MCF 10A (cell line): ENCODE measurements at regions of chr3 and their contacts with region 1.

Region 1: DNA sequence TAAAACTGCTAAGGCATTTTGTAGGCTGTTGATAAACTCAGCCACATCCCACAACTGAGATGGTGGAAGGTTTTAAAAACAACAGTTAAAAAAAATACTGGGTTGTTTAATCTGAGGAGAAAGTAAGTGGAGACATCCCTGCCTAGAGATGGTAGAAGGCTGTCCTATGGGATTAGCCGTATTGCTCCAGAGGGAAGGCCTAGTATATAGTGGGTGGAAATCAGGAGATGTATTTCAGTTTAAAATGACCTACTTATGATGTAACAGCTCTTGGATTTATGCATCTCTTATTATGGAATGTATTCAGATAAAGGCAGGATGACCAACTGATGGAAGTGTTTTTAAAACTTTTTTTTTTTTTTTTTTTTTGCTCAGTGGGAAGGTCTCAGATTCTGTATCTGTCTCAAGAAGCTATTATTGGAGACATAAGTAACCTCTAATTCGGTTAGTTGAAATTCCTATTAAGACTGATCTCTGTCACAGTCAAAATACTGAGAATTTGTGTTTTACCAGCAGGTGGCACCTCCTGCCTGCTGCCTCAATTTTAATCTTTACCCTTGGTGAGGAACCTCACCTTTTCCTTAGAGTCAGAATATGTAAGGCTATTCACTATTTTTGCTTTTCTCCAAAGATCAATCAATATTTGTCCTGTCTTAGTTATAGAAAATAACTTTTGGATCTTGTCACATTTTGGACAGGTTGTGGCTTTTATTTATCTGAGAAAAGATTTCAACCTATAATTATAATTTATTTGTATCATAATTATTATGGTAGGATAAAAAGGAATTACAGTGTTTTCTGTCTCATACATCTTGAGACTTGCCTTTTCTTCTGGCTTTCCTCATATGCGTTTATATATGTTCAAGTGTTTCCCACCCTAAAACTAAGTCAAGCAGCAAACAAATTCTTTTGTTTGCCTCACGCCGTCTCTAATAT is 63.0 kb downstream of the VPS8 start:
- DNase-seq: peak; percentile 35
- H3K4me3 Mint-ChIP-seq: no peak overlapping the region
- H3K27ac Mint-ChIP-seq: no peak overlapping the region
- H3K4me1 Mint-ChIP-seq: no peaks in the 10 kb centered on the region
- H3K27me3 Mint-ChIP-seq: no peaks in the 10 kb centered on the region
- CTCF ChIP-seq: peak; percentile 71

Region 2: DNA sequence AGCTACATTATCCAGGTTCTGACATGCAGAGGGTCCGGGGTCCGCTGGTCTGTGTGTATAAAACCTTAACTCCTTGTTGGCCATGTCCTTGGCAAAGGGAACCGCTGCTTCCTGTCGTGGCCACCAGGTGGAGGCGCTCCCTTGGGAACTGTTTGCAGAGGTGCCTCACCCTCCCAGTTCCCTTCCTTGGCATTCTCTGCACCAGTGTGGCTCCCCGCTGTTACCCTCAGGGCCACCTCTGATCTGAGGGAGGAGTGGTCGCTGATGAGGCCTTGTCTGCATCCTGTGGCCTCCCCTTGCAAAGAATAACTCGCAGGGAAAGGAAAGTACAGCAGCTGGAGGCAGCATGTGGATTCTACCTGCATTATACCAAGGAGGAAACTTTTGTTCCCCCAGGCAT is 405.6 kb before region 1 on chr3:
- CTCF ChIA-PET with region 1: no interaction called
- POLR2A ChIA-PET with region 1: no interaction called
- intact Hi-C with region 1: no loop called
- DNase-seq: peak; percentile 68
- H3K4me3 Mint-ChIP-seq: no peak overlapping the region
- H3K27ac Mint-ChIP-seq: no peak overlapping the region
- H3K4me1 Mint-ChIP-seq: no peaks in the 10 kb centered on the region
- H3K27me3 Mint-ChIP-seq: peaks cover 44% of the 10 kb centered on the region
- CTCF ChIP-seq: peak; percentile 78

Region 3: GRCh38 chr3:184561061-184561912 is 313.7 kb before region 1 on chr3 and contains the start of gene EPHB3:
- CTCF ChIA-PET with region 1: no interaction called
- POLR2A ChIA-PET with region 1: no interaction called
- intact Hi-C with region 1: no loop called
- DNase-seq: peak; percentile 99
- H3K4me3 Mint-ChIP-seq: peak within 1 kb of the TSS; percentile 83
- H3K27ac Mint-ChIP-seq: no peak within 1 kb of the TSS
- H3K4me1 Mint-ChIP-seq: peaks cover 38% of the 10 kb centered on the region
- H3K27me3 Mint-ChIP-seq: no peaks in the 10 kb centered on the region
- CTCF ChIP-seq: peak; percentile 99
- total RNA-seq, gene EPHB3: 4.0 and 5.4 TPM in 2 replicates

Region 4: DNA sequence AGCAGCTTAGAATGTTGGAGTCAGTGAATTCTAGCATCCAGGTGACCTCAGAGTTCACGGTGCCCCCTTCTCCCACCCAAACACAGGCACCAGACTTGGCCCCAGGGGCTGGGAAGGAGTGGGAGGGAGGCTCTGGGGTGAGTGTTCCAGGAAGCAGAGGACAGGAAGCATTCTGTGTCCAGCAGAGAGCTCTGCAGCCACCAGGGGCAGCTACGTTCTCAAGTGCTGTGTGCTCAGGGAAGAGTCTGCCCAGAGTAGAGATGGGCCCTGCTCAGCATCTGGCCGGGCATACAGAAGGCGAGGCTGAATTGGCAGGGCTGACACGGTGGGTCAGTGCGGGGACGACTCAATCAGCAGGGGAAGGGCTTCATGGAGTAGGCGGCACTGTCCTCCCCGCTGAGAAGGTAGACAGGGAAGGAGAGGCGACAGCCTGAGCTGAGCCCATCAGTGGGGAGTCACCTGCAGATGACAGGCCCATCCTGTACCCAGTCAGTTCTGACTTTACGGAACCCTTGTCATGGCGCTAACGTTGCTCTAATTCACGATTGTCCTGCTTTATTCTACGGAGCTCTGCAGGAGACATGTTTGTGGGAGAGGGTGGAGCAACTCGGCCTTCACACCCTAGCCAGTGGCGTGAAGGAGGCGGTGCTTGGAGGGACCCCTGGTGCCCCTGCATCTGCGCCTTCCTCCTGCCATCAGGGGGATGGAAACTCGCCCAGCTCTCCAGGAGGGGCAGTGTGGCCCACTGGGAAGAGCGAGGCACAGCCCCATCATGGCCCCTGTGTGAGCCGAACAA is 195.7 kb after region 1 on chr3:
- CTCF ChIA-PET with region 1: no interaction called
- POLR2A ChIA-PET with region 1: no interaction called
- intact Hi-C with region 1: loop called (anchors 10 kb)
- DNase-seq: peak; percentile 12
- H3K4me3 Mint-ChIP-seq: no peak overlapping the region
- H3K27ac Mint-ChIP-seq: no peak overlapping the region
- H3K4me1 Mint-ChIP-seq: no peaks in the 10 kb centered on the region
- H3K27me3 Mint-ChIP-seq: no peaks in the 10 kb centered on the region
- CTCF ChIP-seq: no peak

Region 5: GRCh38 chr3:185176750-185177359 is 301.9 kb after region 1 on chr3:
- CTCF ChIA-PET with region 1: interaction called, 14 read pairs
- POLR2A ChIA-PET with region 1: no interaction called
- intact Hi-C with region 1: loop called (anchors 1 kb)
- DNase-seq: peak; percentile 48
- H3K4me3 Mint-ChIP-seq: no peak overlapping the region
- H3K27ac Mint-ChIP-seq: no peak overlapping the region
- H3K4me1 Mint-ChIP-seq: no peaks in the 10 kb centered on the region
- H3K27me3 Mint-ChIP-seq: no peaks in the 10 kb centered on the region
- CTCF ChIP-seq: peak; percentile 72

Region 6: DNA sequence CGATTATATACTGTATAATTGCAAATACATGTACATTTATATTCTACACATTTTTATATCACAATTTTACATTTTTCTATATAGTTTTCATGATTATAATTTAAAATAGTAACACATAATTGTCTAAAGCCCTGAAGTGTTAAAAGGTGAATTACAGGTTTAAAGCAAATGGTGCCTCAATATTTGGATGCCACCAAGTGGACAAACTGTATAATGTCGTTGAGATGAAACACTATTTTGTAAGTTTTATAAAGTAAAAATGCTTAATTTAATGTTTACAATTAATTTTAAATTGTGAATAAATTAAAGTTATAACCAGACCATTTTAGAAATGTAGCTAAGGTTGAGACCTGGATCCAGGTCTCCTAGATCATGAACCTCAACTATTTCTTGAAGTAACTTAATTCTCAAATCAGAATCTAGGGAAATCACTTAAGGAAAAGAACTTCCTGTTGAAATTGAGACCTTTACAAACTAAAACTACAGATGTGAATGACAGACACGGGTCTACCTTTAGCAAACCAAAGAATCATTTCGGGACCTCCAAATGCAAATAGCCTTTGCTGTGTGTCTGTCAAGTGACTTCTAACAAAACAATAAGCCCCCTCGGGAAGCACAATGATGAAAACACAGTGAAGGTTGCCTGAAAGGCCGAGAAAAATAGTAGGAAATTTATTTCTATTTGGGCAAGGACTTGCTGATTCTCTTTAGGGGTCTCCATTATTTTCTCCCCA is 341.1 kb after region 1 on chr3:
- CTCF ChIA-PET with region 1: interaction called, 4 read pairs
- POLR2A ChIA-PET with region 1: interaction called, 3 read pairs
- intact Hi-C with region 1: loop called (anchors 1 kb)
- DNase-seq: peak; percentile 33
- H3K4me3 Mint-ChIP-seq: no peak overlapping the region
- H3K27ac Mint-ChIP-seq: peak overlapping the region; percentile 31
- H3K4me1 Mint-ChIP-seq: no peaks in the 10 kb centered on the region
- H3K27me3 Mint-ChIP-seq: no peaks in the 10 kb centered on the region
- CTCF ChIP-seq: peak; percentile 50

Region 7: DNA sequence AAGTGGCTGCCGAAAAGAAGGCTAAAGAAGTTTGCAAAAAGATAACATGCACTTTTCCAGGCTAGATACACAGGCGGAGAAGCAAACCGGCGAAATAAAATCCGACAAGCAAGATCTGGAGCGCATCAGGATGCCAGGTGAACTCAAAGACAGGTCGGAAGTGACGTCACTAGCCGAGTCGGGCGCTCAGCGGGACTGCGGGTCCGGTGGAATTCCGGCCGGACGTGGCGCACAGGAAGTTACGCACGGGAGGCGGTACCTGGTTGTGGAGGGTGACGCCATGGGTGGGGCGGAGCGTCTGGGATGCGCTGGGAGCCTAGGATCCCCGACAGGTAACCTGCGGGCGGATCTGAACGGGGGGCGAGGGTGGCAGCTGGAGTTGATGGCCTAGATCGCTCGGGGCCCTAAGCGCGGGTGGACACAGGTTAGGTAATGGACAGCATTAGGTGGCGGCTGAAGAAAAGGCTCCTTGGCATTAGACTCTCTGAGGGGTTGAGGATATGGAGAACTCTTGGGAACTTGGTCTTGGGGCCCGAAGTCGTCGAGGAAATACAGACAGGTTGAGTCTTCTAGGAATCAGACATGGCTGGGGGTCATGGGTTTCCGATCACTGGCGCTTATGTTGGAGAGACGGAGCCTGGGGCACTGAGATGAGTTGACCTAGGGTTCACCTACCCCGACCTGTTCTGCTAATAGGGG is 407.9 kb after region 1 on chr3:
- CTCF ChIA-PET with region 1: interaction called, 3 read pairs
- POLR2A ChIA-PET with region 1: no interaction called
- intact Hi-C with region 1: loop called (anchors 5 kb)
- DNase-seq: peak; percentile 94
- H3K4me3 Mint-ChIP-seq: peak overlapping the region; percentile 77
- H3K27ac Mint-ChIP-seq: peak overlapping the region; percentile 70
- H3K4me1 Mint-ChIP-seq: peaks cover 11% of the 10 kb centered on the region
- H3K27me3 Mint-ChIP-seq: no peaks in the 10 kb centered on the region
- CTCF ChIP-seq: no peak